ENCODE measurements at regions of chr17 and their contacts with region 1.

Region 1: GRCh38 chr17:31869797-31870568 is 10.9 kb upstream of the COPRS start:
- DNase-seq: no peak
- H3K4me3 ChIP-seq: no peak overlapping the region
- H3K27ac ChIP-seq: no peak overlapping the region
- H3K4me1 ChIP-seq: no peaks in the 10 kb centered on the region
- H3K27me3 ChIP-seq: no peaks in the 10 kb centered on the region
- CTCF ChIP-seq: no peak

Region 2: GRCh38 chr17:31321481-31321880 is 548.5 kb before region 1 on chr17 and contains the start of gene EVI2A:
- CTCF ChIA-PET with region 1: no interaction called
- POLR2A ChIA-PET with region 1: interaction called, 26 read pairs
- intact Hi-C with region 1: no loop called
- DNase-seq: no peak
- H3K4me3 ChIP-seq: no peak within 1 kb of the TSS
- H3K27ac ChIP-seq: no peak within 1 kb of the TSS
- H3K4me1 ChIP-seq: no peaks in the 10 kb centered on the region
- H3K27me3 ChIP-seq: no peaks in the 10 kb centered on the region
- CTCF ChIP-seq: no peak
- total RNA-seq, gene EVI2A: not detected in 2 replicates

Region 3: GRCh38 chr17:31349454-31349853 is 520.5 kb before region 1 on chr17:
- CTCF ChIA-PET with region 1: no interaction called
- POLR2A ChIA-PET with region 1: no interaction called
- intact Hi-C with region 1: no loop called
- DNase-seq: no peak
- H3K4me3 ChIP-seq: no peak overlapping the region
- H3K27ac ChIP-seq: no peak overlapping the region
- H3K4me1 ChIP-seq: no peaks in the 10 kb centered on the region
- H3K27me3 ChIP-seq: no peaks in the 10 kb centered on the region
- CTCF ChIP-seq: no peak

Region 4: DNA sequence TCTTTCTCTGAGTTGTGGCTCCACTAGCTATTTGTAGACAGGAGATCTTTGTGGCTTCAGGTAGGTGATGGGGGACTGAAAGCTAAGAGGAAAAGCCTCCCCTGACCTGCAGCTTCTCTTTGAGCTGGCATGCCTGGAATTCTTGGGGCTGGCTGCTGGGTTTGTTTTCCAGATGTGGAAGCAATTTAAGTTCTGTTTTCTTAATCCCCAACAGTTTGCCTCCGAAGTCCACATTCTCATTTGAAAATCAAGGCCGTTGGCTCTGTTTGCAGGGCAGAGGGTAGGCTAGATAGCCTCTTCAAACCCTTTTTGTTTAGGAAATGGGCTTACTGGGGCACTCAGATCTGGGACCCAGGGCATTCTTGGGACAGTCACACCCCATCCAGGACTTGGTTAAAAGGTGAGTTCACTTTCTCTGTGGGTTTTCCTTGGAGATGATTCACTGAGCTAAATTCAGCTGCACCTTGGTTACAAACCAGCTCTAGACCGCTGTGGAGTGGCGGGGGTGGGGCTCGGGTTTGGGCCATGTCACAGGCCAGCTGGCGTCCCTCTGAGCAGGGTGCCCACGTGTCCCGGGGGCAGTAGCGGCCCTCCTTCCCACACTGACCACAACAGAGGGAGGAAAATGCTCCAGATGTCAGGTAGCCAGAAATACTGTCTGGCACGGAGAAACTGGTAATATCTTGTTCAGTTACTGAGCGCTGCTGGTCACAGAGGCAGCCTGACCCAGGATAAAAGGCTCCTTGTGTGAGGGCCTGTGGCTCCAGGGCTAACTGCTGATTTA is 370.0 kb before region 1 on chr17:
- CTCF ChIA-PET with region 1: no interaction called
- POLR2A ChIA-PET with region 1: no interaction called
- intact Hi-C with region 1: no loop called
- DNase-seq: peak; percentile 88
- H3K4me3 ChIP-seq: peak overlapping the region; percentile 12; the same call in 1 of the 2 replicates
- H3K27ac ChIP-seq: peak overlapping the region; percentile 60
- H3K4me1 ChIP-seq: peaks cover 56% of the 10 kb centered on the region
- H3K27me3 ChIP-seq: no peaks in the 10 kb centered on the region
- CTCF ChIP-seq: no peak